Tibial artery (tissue), 4 donors: ENCODE measurements at regions of chr2 and their contacts with region 1.

Region 1: DNA sequence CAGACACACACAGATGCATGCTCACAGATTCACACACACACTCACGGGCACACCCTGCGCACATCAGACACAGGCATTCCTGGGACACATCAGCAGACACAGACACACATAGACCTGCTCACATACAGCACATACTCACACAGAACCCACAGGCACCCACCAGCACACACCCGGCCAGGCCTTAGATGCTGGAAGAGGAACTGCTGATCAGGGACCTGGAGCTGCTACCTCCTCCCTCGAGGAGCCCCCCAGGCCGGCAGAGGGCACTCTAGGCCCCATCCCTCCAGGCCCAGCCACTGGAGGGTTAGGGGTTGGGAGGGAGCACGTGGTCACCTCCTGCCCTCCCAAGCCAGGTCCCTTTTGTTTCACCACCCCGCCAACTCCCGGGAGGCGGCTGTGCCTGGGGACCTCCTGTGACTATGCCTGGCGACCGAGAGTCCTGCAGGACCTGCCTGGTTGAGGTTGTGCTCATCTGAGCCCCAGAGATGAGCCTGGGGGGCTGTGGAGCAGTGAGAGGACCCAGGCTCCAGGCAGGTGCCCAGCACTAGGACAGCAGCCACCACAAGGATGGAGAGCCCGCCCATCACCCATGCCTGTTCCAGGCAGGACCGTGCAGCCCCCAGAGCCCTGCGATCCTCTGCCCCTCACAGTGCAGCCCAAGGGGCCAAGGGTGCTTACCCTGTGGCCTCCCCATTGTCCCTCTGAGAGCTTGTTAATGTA is 21.0 kb upstream of the PTMA start:
- DNase-seq: no peak
- H3K4me3 ChIP-seq: no peak overlapping the region
- H3K27ac ChIP-seq: no peak overlapping the region
- H3K4me1 ChIP-seq: peaks cover 0 to 6% (median 0%) of the 10 kb centered on the region in 4 donors
- H3K27me3 ChIP-seq: no peaks in the 10 kb centered on the region
- CTCF ChIP-seq: peak; percentile 44 to 53

Region 2: DNA sequence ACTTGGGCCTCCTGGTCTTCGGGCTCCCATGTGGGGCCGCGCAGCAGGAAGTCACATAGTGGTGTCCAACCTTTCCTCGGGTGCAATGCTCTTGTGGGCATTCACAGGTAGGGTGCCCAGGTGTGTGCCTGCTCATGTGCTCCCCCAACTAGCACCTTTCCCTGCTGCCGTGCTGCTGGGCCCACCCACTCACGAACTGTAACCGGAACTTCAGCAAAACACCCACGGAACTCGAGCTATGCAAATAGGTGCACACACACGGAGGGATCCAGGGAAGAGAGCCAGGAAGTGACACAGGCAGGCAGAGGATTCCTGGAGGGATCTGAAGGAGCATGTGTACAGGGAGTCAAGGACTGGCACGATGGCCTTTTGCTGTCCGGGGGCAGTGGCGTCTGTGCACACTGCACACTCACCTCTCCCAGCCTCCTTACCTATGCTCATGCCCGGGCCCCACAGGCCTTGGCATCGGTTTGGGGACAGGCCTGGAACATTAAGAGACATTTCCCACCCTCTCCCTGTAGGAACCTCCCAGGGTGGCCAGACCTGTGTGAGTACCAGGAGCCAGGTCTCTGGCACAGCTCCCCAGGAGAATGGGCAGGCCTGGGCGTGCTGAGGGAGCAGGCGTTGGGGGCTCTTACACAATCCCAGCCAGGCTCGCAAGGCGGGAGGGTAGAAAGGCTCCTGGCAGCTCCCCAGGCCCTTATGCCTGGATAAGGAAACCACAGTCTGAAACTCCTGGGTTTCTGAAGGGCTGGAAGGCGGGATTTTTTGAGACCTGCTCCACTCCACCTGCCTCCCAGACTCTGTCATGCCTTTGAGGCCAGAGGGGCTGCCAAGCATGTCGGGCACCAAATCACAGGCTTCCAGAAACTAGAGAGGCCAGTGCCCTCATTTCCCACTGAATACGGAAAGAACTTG is 14.4 kb after region 1 on chr2:
- intact Hi-C with region 1: loop called (anchors 2 kb)
- DNase-seq: no peak
- H3K4me3 ChIP-seq: no peak overlapping the region
- H3K27ac ChIP-seq: no peak overlapping the region
- H3K4me1 ChIP-seq: peaks cover 0 to 30% (median 13%) of the 10 kb centered on the region in 4 donors
- H3K27me3 ChIP-seq: no peaks in the 10 kb centered on the region
- CTCF ChIP-seq: no peak

Region 3: GRCh38 chr2:231780909-231781797 is 93.9 kb after region 1 on chr2 and contains the start of gene PDE6D:
- intact Hi-C with region 1: loop called (anchors 10 kb)
- DNase-seq: peak; percentile 99
- H3K4me3 ChIP-seq: peak within 1 kb of the TSS; percentile 90 to 95
- H3K27ac ChIP-seq: peak within 1 kb of the TSS; percentile 85 to 90
- H3K4me1 ChIP-seq: peaks cover 0 to 49% (median 36%) of the 10 kb centered on the region in 4 donors
- H3K27me3 ChIP-seq: no peaks in the 10 kb centered on the region
- CTCF ChIP-seq: no peak